Transverse colon (tissue), 4 donors: ENCODE measurements at regions of chr12 and their contacts with region 1.

Region 1: DNA sequence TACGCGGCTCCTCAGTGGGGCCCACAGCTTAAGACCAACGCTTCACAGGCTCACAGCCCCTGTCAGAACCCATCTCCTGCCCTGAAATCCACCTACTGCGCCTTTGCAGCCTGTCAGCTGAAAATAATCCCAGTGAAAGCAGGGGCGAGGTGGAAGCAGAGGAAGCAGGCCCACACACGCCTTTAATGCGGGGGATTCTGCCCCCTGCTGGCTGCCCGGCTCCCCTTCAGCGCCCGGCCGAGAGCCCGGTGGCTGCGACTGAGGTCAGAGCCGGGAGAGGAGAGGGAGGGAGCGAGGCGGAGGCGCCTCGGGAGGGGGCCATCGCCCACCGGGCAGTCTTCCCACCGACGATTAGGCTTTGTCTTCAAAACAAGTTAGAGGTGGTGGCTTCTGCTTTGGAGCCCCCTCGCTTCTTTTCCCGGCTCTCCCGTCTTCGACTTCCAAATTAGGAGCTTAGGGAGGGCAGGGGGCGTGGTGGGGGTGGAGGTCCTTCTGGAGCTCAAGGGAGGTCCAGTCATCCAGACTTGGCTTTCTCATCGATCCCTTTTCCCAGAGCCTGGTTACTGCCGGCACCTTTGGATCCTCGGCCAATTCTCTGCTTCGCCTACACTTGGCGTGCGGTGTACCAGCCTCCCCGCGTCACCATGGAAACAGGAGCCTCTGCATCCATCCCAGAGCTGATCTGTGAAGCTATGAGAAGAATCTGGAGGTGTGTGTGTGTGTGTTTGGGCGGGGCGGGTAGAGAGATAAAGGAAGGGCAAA is 25.2 kb upstream of the RND1 start:
- DNase-seq: peak; percentile 82
- H3K4me3 ChIP-seq: peak overlapping the region in 2 of 4 donors; percentile 17 to 27
- H3K27ac ChIP-seq: no peak overlapping the region
- H3K4me1 ChIP-seq: peaks cover 0 to 9% (median 6%) of the 10 kb centered on the region in 4 donors
- H3K27me3 ChIP-seq: peaks cover 18% of the 10 kb centered on the region
- CTCF ChIP-seq: peak; percentile 86 to 95 (median 91)
- EP300 ChIP-seq: no peak
- POLR2A ChIP-seq: no peak

Region 2: GRCh38 chr12:48311313-48311712 is 579.5 kb before region 1 on chr12:
- in situ Hi-C with region 1: no loop called
- intact Hi-C with region 1: no loop called
- DNase-seq: no peak
- H3K4me3 ChIP-seq: no peak overlapping the region
- H3K27ac ChIP-seq: no peak overlapping the region
- H3K4me1 ChIP-seq: no peaks in the 10 kb centered on the region
- H3K27me3 ChIP-seq: no peaks in the 10 kb centered on the region
- CTCF ChIP-seq: no peak
- EP300 ChIP-seq: no peak
- POLR2A ChIP-seq: no peak

Region 3: DNA sequence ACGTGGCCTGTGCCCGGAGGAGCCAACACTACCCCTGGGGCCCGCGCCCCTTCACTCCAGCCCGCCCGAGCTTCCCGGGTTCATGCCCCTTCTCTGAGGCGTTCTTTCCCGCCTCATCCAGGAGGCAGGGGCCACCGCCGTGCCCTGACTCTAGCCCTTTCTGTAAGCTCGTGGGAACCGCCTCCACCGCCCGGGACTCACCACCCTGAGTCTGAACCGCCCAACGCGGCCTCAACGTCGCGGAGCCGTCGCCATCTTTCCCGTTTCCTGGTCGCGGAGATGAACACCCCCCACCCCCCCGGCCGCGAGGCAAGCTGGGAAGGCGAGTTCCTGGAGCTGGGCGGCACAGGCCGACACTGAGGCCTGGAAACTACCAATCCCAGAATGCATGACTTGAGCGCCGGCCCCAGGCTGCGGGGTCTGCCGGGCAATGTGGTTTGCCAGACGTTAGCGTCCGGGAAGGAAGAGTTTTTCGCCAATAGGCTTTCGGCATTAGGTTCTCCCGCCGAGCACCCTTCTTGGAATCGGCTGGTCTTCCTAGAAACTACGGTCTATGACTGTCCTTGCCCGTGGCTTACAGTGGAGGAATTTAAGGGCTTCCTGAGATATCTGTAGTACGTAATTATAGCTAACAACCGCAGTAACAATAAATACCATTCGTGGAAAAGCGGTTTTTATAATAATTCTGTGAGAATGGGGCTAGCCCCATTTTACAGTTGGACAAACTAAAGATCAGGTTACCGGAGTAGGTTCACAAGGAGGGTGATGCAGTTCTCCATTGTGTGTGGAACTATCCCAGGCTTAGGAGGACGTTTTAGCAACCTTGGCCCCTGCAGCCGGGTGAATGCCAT is 38.7 kb before region 1 on chr12 and contains the start of gene DDX23:
- in situ Hi-C with region 1: no loop called
- intact Hi-C with region 1: loop called (anchors 2 kb)
- DNase-seq: peak; percentile 95
- H3K4me3 ChIP-seq: peak within 1 kb of the TSS; percentile 71 to 98 (median 76)
- H3K27ac ChIP-seq: peak within 1 kb of the TSS; percentile 80 to 95 (median 88)
- H3K4me1 ChIP-seq: peaks cover 10 to 27% (median 19%) of the 10 kb centered on the region in 4 donors
- H3K27me3 ChIP-seq: no peaks in the 10 kb centered on the region
- CTCF ChIP-seq: no peak
- EP300 ChIP-seq: peak; percentile 88
- POLR2A ChIP-seq: peak; percentile 68
- total RNA-seq, gene DDX23: 82.9 to 143 (median 83.9) TPM

Region 4: DNA sequence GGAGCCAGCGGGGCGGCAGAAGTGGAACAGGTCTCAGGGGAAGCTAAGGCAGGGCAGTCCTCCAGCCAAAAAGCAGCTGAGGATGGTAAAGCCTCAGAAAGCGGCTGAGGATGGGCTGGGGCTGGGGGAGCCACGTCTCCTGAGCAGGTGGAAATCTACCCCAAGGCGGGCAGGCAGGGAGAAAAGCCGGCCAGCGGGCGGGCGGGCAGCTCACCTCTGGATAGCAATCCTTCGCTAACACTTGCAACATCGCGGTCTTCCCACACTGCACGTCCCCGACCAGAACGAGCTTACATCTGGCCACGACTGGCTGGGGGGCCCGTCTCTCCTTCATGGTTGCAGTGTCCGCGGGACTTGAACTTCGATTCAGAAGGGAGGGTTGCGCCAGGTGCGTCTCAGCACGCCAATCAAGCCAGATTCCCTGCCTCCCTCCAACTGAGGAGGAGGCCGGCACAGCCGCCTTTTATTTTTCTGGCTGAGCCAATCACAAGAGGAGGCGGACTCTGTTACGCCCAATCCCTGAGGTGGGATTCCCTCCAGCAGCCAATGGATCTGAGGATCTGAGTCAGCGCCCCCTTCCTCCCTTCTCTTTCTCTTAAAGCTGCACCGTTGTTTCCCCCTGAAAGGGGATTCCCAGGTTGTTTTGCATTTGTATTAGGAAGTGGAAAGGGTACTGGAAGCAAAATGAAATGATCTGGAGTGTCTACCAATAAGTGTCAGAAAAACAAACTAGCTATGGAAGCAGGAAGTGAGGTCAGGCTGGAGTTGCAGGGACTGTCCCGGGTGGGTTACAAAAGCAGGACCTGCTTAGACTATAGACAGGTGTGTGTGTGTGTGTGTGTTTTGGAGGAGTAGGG is 25.2 kb before region 1 on chr12 and contains the start of gene RND1:
- in situ Hi-C with region 1: no loop called
- intact Hi-C with region 1: loop called (anchors 1 kb)
- DNase-seq: peak; percentile 93
- H3K4me3 ChIP-seq: peak within 1 kb of the TSS; percentile 53 to 76 (median 55)
- H3K27ac ChIP-seq: peak within 1 kb of the TSS; percentile 49 to 77 (median 71)
- H3K4me1 ChIP-seq: peaks cover 4 to 29% (median 13%) of the 10 kb centered on the region in 4 donors
- H3K27me3 ChIP-seq: peaks cover 9% of the 10 kb centered on the region
- CTCF ChIP-seq: peak in 2 of 5 experiments; percentile 9 to 15
- EP300 ChIP-seq: no peak
- POLR2A ChIP-seq: peak; percentile 97
- total RNA-seq, gene RND1: 1.1 to 19.1 (median 3.3) TPM in 3 of 4 donors, not detected in the other